PC-9 (cell line): ENCODE measurements at regions of chr11 and their contacts with region 1.

Region 1: GRCh38 chr11:62855571-62856332 is 16.4 kb upstream of the WDR74 start:
- DNase-seq: peak; percentile 98 to 99
- H3K4me3 ChIP-seq: peak overlapping the region; percentile 97
- H3K27ac ChIP-seq: peak overlapping the region; percentile 85
- H3K4me1 ChIP-seq: peaks cover 37% of the 10 kb centered on the region
- H3K27me3 ChIP-seq: no peaks in the 10 kb centered on the region
- CTCF ChIP-seq: no peak

Region 2: DNA sequence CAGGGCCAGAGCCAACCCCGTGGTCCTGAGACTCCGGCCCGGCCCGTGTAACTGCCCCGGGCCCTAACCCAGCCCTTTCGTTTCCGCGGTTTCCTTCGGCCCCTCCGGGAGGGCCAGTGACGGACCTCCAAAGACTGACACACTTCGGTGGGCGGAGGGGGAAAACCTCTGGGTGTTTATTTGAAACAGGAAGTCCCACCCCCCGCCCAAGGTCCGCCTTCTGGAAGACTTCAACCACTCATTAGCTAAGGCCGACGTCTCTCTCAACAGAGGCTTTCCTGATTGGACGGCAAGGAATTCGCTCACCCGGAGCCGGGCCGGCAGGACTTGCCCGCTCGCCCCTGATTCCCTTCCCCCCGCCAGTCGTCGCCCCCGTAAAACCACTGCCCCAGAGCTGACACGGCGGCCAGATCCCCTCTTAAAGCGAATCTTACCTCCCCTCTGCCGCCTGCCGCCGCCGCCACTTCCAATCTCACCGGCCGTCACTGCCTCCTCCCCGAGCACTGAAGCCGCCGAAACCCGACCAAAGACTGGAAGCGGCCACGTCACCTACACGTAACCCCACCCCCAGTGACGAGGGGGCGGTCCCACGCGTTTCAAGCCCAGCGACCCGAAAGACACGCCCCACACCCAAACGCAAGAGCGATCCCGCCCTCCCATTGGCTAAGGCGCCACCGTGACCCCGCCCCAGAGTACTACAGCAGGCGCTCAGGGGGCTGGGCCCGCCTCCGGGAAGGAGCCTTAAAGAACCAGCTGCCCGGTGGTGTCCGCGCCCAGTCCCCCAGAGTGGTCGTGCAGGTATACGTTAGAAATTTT is 24.0 kb before region 1 on chr11 and contains the start of gene STX5:
- CTCF ChIA-PET with region 1: no interaction called
- POLR2A ChIA-PET with region 1: interaction called, 10 read pairs
- intact Hi-C with region 1: no loop called
- DNase-seq: peak; percentile 96 to 99
- H3K4me3 ChIP-seq: peak within 1 kb of the TSS; percentile 100
- H3K27ac ChIP-seq: peak within 1 kb of the TSS; percentile 77
- H3K4me1 ChIP-seq: peaks cover 22% of the 10 kb centered on the region
- H3K27me3 ChIP-seq: no peaks in the 10 kb centered on the region
- CTCF ChIP-seq: no peak
- total RNA-seq, gene STX5: 61.9 and 65.8 TPM in 2 replicates

Region 3: GRCh38 chr11:62880803-62881578 is 25.2 kb after region 1 on chr11 and contains the start of gene SLC3A2:
- CTCF ChIA-PET with region 1: no interaction called
- POLR2A ChIA-PET with region 1: interaction called, 19 read pairs
- intact Hi-C with region 1: no loop called
- DNase-seq: peak; percentile 85 to 90
- H3K4me3 ChIP-seq: peak within 1 kb of the TSS; percentile 69
- H3K27ac ChIP-seq: peak within 1 kb of the TSS; percentile 96
- H3K4me1 ChIP-seq: peaks cover 48% of the 10 kb centered on the region
- H3K27me3 ChIP-seq: no peaks in the 10 kb centered on the region
- CTCF ChIP-seq: peak; percentile 68
- total RNA-seq, gene SLC3A2: 513 and 619 TPM in 2 replicates

Region 4: GRCh38 chr11:63791495-63792167 is 935.9 kb after region 1 on chr11:
- CTCF ChIA-PET with region 1: no interaction called
- POLR2A ChIA-PET with region 1: no interaction called
- intact Hi-C with region 1: no loop called
- DNase-seq: no peak
- H3K4me3 ChIP-seq: no peak overlapping the region
- H3K27ac ChIP-seq: no peak overlapping the region
- H3K4me1 ChIP-seq: no peaks in the 10 kb centered on the region
- H3K27me3 ChIP-seq: no peaks in the 10 kb centered on the region
- CTCF ChIP-seq: no peak

Region 5: DNA sequence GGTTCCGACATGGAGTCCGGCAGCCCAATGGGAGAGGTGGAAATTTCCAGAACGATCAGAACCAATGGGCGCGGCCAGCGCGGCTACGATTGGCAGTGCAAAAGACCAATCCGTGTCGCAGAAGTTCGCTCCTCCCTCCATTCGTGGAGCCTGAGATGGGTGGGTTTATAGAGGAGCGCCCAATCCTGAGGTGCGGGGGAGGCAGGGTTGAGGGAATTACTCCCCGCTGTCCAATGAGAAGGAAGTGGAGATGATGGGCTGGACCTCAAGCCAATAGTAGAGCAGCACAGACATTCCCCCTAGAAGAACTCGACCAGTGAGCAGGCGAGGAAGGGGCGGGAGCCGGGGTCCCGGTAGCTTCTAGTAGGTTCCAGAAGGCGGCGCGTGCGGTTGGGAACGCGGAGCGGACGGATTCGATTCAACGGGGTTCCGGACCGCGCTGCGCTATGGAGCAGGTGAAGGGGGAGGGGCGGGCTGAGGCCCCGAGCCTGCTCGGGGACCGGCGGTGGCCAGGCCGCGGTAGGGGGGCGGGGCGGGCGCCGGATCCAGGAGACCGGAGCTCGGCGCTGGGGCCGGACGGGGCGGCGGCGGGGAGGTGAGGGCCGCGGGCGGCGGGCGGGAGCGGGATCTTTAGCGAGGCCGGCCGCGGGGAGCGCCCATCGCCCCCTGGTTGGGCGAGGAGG is 1330.2 kb after region 1 on chr11 and contains the start of gene STIP1:
- CTCF ChIA-PET with region 1: no interaction called
- POLR2A ChIA-PET with region 1: interaction called, 14 read pairs
- intact Hi-C with region 1: no loop called
- DNase-seq: peak; percentile 100
- H3K4me3 ChIP-seq: peak within 1 kb of the TSS; percentile 64
- H3K27ac ChIP-seq: peak within 1 kb of the TSS; percentile 64
- H3K4me1 ChIP-seq: peaks cover 28% of the 10 kb centered on the region
- H3K27me3 ChIP-seq: no peaks in the 10 kb centered on the region
- CTCF ChIP-seq: peak; percentile 31; the same call in 1 of the 2 replicates
- total RNA-seq, gene STIP1: 267 and 299 TPM in 2 replicates